ENCODE measurements at regions of chr4 and their contacts with region 1.

Region 1: GRCh38 chr4:181737744-181738143 is 505.5 kb upstream of the TENM3 start:
- DNase-seq: no peak
- ATAC-seq: no peak
- H3K4me3 ChIP-seq: no peak overlapping the region
- H3K27ac ChIP-seq: no peak overlapping the region
- H3K4me1 ChIP-seq: no peaks in the 10 kb centered on the region
- H3K27me3 ChIP-seq: no peaks in the 10 kb centered on the region
- CTCF ChIP-seq: no peak
- EP300 ChIP-seq: no peak
- POLR2A ChIP-seq: no peak
- RAD21 ChIP-seq: no peak

Region 2: GRCh38 chr4:180058731-180059215 is 1679.0 kb before region 1 on chr4:
- CTCF ChIA-PET with region 1: no interaction called
- POLR2A ChIA-PET with region 1: no interaction called
- in situ Hi-C with region 1: no loop called
- intact Hi-C with region 1: loop called (anchors 10 kb)
- DNase-seq: no peak
- ATAC-seq: peak; percentile 84
- H3K4me3 ChIP-seq: peak overlapping the region; percentile 40 to 67 (median 44); a peak in 5 of 6 replicates
- H3K27ac ChIP-seq: no peak overlapping the region
- H3K4me1 ChIP-seq: peaks cover 6% of the 10 kb centered on the region; the same call in 1 of the 2 replicates
- H3K27me3 ChIP-seq: peaks cover 3 to 34% of the 10 kb centered on the region in 2 experiments; a peak in 4 of 5 replicates
- CTCF ChIP-seq: no peak
- EP300 ChIP-seq: no peak
- POLR2A ChIP-seq: no peak
- RAD21 ChIP-seq: no peak